Activated CD4-positive, alpha-beta T cell treated with anti-CD3 and anti-CD28 coated beads, Interleukin-2, amount 10 ng/mL, durations not matched to agents 24 days and 14 days (primary cell): ENCODE measurements at regions of chr1 and their contacts with region 1.

Region 1: DNA sequence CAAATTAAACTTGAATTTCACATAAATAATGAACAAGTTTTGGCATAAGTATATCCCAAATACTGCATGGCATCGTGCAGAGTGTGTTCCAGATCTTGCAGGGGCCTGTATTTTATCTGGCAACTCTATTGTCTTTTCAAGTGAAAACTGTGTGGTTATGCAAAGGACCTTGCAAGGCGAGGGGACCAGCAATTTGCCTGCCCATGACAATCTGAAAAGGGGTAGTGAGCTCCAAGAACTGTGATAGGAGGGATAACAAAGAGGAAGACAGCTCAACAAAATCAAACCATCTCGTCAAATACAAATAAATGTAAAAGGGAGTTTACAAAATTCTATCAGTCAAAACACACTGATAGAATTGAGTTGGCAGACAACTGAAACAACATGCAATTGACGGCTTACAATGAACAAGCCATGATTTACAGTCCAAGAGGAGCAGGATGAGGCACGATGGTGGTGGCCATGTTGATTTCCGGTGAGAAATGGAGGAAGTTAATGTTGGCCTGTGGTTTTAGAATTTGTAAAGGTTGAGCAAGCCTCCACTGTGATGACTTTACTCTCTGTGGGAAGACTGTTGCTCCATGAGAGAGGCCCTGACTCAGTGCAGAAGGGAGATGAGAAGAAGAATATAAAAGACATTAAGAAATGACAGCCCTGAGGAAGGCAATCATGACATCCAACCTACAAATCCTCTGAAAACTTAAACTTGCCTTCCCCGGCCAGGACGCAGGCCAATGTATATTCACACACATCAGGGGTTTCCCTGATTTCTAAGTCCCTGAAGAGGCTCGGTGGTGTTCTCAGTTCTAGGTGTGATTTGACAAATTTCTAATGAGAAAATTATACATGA is 132.2 kb downstream of the ADSS2 start:
- DNase-seq: peak; percentile 85
- H3K4me3 Mint-ChIP-seq: peak overlapping the region; percentile 60
- H3K27ac Mint-ChIP-seq: peak overlapping the region; percentile 84
- H3K4me1 Mint-ChIP-seq: peaks cover 43% of the 10 kb centered on the region
- H3K27me3 Mint-ChIP-seq: no peaks in the 10 kb centered on the region

Region 2: DNA sequence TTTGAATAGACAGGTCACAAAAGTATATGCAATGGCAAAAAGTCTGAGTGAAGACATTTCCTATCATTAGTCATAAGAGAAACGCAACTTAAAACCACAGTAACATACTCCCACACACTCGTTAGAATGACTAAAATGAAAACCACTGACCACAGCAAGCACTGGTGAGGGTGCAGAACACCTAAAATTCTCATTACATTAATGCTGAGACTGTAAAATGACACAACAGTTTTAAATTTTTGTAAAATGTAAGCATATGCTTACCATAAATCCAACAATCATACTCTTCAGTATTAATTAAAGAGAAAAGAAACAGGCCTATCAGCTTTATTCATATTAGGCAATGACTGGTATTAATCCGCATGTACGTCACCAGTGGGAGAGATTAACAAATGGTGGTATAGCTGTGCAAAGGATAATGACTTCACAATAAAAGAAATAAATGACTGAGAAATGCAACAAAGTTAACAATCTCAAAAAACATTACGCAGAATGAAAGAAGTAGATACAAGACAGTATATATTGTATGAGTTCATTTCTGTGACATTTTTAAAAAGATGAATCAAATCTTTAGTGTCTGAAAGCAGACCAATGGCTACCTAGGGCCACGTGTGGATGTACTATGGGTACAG is 723.0 kb before region 1 on chr1:
- intact Hi-C with region 1: loop called (anchors 5 kb)
- DNase-seq: peak; percentile 81
- H3K4me3 Mint-ChIP-seq: peak overlapping the region; percentile 43
- H3K27ac Mint-ChIP-seq: peak overlapping the region; percentile 87
- H3K4me1 Mint-ChIP-seq: peaks cover 24% of the 10 kb centered on the region
- H3K27me3 Mint-ChIP-seq: no peaks in the 10 kb centered on the region

Region 3: DNA sequence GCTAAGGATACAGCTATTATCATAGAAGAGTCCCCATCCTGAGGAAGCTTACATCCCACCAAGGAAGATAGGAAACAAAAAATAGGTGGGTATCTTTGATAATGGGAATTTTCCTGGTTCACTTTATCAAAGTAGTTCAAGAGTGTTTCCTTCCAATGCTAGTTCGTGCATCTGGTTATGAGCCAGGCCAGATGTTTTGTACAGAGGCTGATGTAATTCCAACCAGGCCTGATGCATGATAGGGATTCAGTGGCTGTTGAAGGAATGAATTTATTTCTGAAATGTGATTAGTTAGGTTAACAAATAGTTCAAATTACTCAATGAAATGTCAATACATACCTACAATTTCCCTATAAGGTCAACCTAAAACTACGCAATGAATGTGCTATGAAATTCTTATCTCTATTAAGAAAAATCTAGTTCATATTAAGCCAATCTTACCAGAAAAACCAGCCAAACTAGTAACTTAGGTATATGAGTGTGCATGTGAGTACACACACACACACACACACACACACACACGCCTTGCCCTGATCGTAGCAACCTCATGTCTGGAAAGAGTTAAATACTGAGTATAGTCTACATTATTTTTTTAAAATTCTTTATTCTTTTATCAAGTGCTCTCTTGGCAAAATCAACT is 277.9 kb before region 1 on chr1:
- intact Hi-C with region 1: no loop called
- DNase-seq: no peak
- H3K4me3 Mint-ChIP-seq: no peak overlapping the region
- H3K27ac Mint-ChIP-seq: no peak overlapping the region
- H3K4me1 Mint-ChIP-seq: peaks cover 2% of the 10 kb centered on the region
- H3K27me3 Mint-ChIP-seq: peaks cover 48% of the 10 kb centered on the region

Region 4: DNA sequence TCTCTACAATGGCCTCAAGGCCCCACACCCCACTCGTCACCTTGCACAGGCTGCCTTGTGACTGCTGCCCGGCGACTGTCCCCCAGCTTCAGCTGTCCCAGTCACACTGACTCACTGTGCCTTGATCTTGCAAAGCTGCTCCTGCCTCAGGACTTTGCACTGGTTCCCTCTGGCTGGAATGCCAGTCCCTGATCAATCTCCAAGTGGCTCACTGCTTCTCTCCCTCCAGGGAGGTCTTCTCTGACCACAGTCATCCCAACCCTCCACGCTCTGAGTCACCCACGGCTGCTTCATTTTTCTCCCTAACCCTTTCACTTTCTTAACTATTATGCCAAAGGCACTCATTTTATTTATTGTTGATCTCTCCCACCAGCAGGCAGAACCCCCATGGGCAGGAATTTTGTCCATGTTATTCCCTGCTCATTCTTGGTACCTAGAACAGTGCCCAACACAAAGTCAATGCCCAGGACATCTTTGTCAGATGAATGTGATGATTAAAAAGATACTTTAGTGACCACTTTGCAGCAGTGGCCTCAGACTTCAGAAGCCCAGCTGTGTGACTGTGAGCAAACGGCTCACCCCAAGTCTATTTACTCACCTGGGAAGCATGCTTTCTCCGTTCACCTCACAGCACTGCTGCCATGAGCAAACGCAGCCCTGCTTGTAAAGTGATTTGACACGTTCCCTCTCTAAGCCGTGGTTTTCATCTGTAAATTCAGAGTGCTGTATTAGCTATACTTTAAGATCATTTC is 215.0 kb before region 1 on chr1:
- intact Hi-C with region 1: no loop called
- DNase-seq: no peak
- H3K4me3 Mint-ChIP-seq: no peak overlapping the region
- H3K27ac Mint-ChIP-seq: no peak overlapping the region
- H3K4me1 Mint-ChIP-seq: peaks cover 5% of the 10 kb centered on the region
- H3K27me3 Mint-ChIP-seq: peaks cover 16% of the 10 kb centered on the region

Region 5: DNA sequence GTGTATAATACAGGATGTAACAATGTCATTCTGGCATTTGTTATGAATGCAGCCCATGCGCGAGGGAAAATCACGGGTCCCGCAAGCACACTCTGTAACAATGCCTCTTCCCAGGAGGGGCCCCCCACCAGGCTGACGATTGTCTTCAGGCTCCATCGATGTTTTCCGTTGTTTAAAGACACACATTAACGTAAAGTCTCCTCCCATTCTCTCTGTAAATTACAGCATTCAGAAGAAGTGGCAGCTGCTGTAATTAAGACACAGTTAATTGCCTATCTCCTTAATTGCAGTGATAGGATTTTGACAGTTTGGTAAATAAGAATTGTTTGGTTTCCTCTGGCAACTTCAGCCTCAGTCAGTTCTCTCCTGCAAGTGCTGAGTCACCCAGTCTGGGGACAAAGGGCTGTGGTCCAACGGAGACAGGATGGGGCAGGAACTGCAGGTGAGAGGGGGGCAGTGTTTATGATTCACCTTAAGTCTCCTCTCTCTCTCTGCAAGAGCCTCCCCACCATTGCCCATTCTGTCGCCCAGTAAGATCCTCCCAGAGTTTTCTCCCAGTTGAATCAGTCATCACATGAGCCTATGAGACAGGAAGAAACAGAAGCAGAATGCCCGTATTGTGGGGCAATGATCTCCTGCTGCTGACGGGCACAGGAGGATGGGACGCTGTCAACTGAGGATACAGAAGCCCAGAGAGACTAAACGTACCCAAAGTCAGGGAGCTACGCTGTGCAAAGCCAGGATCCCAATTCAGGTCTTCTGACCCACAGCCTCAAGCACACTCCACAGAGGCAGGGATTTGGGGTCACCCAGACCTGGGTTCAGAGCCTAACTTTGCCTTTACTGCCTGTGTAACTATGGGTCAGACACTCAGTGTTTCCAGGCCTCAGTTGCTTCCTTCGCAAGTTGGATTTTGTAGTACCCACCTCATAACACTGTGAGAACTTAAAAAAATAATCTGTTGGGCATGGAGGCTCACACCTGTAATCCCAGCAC is 22.2 kb after region 1 on chr1:
- intact Hi-C with region 1: loop called (anchors 2 kb)
- DNase-seq: peak; percentile 76
- H3K4me3 Mint-ChIP-seq: peak overlapping the region; percentile 13
- H3K27ac Mint-ChIP-seq: peak overlapping the region; percentile 41
- H3K4me1 Mint-ChIP-seq: peaks cover 25% of the 10 kb centered on the region
- H3K27me3 Mint-ChIP-seq: no peaks in the 10 kb centered on the region

Region 6: GRCh38 chr1:244391761-244392160 is 72.3 kb after region 1 on chr1:
- intact Hi-C with region 1: no loop called
- DNase-seq: no peak
- H3K4me3 Mint-ChIP-seq: no peak overlapping the region
- H3K27ac Mint-ChIP-seq: no peak overlapping the region
- H3K4me1 Mint-ChIP-seq: peaks cover 4% of the 10 kb centered on the region
- H3K27me3 Mint-ChIP-seq: no peaks in the 10 kb centered on the region

Region 7: DNA sequence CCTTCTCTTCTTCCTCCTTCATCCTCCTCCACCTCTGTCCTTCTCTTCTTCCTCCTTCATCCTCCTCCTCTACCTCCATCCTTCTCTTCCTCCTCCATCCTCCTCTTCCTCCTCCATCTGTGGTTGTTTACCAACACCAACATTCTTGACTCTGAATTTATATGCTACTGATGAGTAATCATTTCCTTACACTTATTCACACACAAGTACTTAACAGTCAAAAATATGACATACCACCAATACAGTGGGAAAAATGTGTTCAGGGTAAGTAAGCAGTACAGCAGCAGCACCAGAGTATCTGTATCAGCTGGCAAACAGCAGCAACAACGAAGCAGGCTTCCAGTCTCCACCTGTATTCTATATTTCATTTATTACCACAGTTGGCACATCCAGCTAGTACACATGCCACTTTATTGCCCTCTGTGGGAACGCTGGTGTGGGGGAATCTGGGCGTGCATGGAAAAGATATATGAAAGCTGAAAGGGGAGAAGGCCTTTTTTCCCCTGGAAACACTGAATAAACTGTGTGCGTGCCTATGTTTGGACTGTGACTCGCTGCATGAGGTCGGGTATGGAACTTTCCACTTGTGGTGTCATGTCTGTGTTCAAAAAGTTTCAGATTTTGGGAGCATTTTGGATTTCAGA is 116.2 kb after region 1 on chr1:
- intact Hi-C with region 1: loop called (anchors 1 kb)
- DNase-seq: peak; percentile 59
- H3K4me3 Mint-ChIP-seq: peak overlapping the region; percentile 63
- H3K27ac Mint-ChIP-seq: peak overlapping the region; percentile 99
- H3K4me1 Mint-ChIP-seq: peaks cover 36% of the 10 kb centered on the region
- H3K27me3 Mint-ChIP-seq: no peaks in the 10 kb centered on the region

Region 8: DNA sequence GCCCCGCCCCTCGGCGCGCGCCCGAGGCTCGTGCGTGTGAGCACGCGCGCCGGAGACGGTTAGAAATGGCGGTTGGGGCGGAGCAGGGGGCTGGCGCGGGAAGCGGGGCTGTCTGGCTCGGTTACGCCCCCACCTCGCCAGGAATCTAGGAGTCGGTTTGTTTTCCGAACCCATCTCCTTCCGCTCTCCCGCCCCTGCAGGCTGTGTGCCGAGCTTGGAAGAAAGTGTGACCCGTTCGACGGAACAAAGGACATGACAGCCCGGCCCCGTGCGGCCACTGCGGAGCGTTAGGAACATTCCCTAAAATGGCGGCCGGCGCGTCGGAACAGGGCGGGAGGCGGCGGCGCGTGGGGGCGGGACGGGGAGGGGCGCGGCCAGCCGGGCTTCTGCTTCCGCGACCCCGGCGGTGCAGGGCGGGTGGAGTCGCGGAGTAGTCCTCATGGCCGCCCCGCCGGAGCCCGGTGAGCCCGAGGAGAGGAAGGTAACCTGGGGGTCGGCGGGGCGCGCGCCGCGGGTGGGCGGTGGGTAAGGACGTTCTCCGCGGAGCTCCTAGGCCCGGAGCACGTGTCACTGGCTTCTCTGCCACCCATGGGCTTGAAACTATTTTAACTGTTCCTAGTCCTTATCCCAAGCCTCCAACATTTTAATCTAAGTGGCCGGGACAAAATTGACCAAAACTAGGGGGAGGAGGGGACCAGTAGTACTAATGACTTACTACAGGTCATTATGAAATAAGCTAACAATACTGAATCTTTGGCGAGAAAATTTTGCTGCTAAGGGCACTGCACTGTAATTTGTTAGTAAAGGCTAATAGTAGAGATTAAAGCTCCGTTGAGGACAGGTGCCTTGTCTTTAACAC is 516.0 kb after region 1 on chr1 and contains the start of gene COX20:
- intact Hi-C with region 1: loop called (anchors 10 kb)
- DNase-seq: peak; percentile 97
- H3K4me3 Mint-ChIP-seq: peak within 1 kb of the TSS; percentile 91
- H3K27ac Mint-ChIP-seq: peak within 1 kb of the TSS; percentile 99
- H3K4me1 Mint-ChIP-seq: peaks cover 43% of the 10 kb centered on the region
- H3K27me3 Mint-ChIP-seq: no peaks in the 10 kb centered on the region
- total RNA-seq, gene COX20: 28.6 and 30.0 TPM in 2 replicates